IMR-90 (cell line): ENCODE measurements at regions of chr13 and their contacts with region 1.

Region 1: GRCh38 chr13:49436890-49437289 is 7.0 kb downstream of the CAB39L start:
- DNase-seq: peak; percentile 73
- ATAC-seq: peak; percentile 78
- H3K4me3 ChIP-seq: no peak overlapping the region
- H3K27ac ChIP-seq: no peak overlapping the region
- H3K4me1 ChIP-seq: peaks cover 2% of the 10 kb centered on the region; the same call in 1 of the 2 replicates
- H3K27me3 ChIP-seq: no peaks in the 10 kb centered on the region
- CTCF ChIP-seq: peak; percentile 54
- POLR2A ChIP-seq: no peak
- RAD21 ChIP-seq: peak; percentile 62

Region 2: GRCh38 chr13:49124693-49125304 is 312.1 kb before region 1 on chr13:
- CTCF ChIA-PET with region 1: no interaction called
- POLR2A ChIA-PET with region 1: no interaction called
- dilution Hi-C with region 1: no loop called
- in situ Hi-C with region 1: no loop called
- intact Hi-C with region 1: no loop called
- DNase-seq: no peak
- ATAC-seq: no peak
- H3K4me3 ChIP-seq: no peak overlapping the region
- H3K27ac ChIP-seq: no peak overlapping the region
- H3K4me1 ChIP-seq: peaks cover 3% of the 10 kb centered on the region
- H3K27me3 ChIP-seq: no peaks in the 10 kb centered on the region
- CTCF ChIP-seq: no peak
- POLR2A ChIP-seq: no peak
- RAD21 ChIP-seq: no peak

Region 3: DNA sequence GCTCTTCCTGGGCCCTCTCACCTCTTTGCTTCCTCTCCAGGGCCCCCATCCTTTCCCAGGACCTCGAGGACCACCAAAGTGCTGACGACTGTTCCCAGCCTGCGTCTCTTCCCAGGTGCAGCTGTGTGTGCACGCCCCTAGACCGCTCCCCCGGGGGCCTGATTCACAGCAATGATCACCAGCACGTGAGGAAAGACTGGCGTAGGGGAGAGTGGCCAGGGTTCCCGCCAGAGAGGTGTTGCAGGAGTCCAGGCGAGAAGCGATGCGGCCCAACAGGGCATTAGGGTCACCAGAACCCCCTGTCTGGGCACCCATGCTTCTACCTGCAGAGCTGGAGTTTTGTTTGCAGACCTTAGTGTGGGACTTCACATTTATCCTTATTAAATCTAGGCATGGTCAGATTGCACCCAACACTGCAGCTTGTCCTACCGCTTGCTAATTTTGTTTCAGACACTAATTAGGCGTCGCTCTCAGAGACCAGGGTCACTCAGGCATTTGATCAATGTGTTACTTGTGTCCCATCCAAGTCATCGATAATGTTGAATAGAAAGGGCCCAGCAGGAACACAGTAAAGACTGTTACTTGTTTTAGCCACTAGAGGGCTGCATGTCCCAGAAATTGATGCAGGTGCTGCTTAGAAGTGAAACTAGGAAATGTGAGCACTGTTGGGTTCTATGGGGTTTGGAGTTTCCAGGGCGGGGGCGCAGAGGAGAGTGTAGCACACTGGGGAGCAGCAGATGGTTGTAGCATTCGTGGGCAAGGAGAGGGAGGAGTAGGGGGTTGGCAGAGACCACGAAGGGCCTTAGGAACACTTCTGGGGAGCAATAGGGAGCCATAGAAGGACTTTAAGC is 135.9 kb before region 1 on chr13:
- CTCF ChIA-PET with region 1: interaction called, 5 read pairs
- POLR2A ChIA-PET with region 1: interaction called, 6 read pairs
- dilution Hi-C with region 1: no loop called
- in situ Hi-C with region 1: loop called (anchors 5 kb)
- intact Hi-C with region 1: loop called (anchors 1 kb)
- DNase-seq: peak; percentile 76
- ATAC-seq: peak; percentile 94
- H3K4me3 ChIP-seq: no peak overlapping the region
- H3K27ac ChIP-seq: peak overlapping the region; percentile 26; the same call in 1 of the 2 replicates
- H3K4me1 ChIP-seq: peaks cover 3% of the 10 kb centered on the region; the same call in 1 of the 2 replicates
- H3K27me3 ChIP-seq: no peaks in the 10 kb centered on the region
- CTCF ChIP-seq: peak; percentile 92
- POLR2A ChIP-seq: no peak
- RAD21 ChIP-seq: peak; percentile 96

Region 4: GRCh38 chr13:49395451-49395865 is 41.4 kb before region 1 on chr13:
- CTCF ChIA-PET with region 1: no interaction called
- POLR2A ChIA-PET with region 1: no interaction called
- dilution Hi-C with region 1: no loop called
- in situ Hi-C with region 1: no loop called
- intact Hi-C with region 1: loop called (anchors 5 kb)
- DNase-seq: no peak
- ATAC-seq: no peak
- H3K4me3 ChIP-seq: no peak overlapping the region
- H3K27ac ChIP-seq: no peak overlapping the region
- H3K4me1 ChIP-seq: no peaks in the 10 kb centered on the region
- H3K27me3 ChIP-seq: no peaks in the 10 kb centered on the region
- CTCF ChIP-seq: no peak
- POLR2A ChIP-seq: no peak
- RAD21 ChIP-seq: no peak

Region 5: DNA sequence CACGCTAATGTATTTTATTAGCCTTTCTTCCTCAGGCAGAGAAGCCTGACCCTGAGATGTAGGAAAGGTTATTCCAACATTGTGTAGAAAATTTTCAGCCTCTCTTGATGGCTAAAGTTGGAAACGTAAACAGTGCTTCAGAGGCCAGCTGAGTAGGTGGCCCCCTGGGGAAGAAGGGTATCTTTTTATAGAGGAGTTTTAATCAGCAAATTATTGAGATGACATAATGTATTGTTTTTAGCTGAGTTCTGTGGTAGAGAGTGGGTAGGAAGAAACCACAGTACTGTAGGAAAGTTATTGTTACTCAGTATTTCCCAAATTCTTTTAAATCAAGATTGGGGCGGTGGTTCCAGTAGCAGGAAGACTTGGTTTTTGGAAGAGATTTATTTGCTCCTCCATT is 1137.8 kb after region 1 on chr13:
- CTCF ChIA-PET with region 1: no interaction called
- POLR2A ChIA-PET with region 1: interaction called, 19 read pairs
- dilution Hi-C with region 1: no loop called
- in situ Hi-C with region 1: no loop called
- intact Hi-C with region 1: no loop called
- DNase-seq: no peak
- ATAC-seq: no peak
- H3K4me3 ChIP-seq: no peak overlapping the region
- H3K27ac ChIP-seq: no peak overlapping the region
- H3K4me1 ChIP-seq: no peaks in the 10 kb centered on the region
- H3K27me3 ChIP-seq: peaks cover 17% of the 10 kb centered on the region
- CTCF ChIP-seq: no peak
- POLR2A ChIP-seq: no peak
- RAD21 ChIP-seq: no peak